CD8-positive, alpha-beta T cell (primary cell): ENCODE measurements at regions of chr5 and their contacts with region 1.

Region 1: DNA sequence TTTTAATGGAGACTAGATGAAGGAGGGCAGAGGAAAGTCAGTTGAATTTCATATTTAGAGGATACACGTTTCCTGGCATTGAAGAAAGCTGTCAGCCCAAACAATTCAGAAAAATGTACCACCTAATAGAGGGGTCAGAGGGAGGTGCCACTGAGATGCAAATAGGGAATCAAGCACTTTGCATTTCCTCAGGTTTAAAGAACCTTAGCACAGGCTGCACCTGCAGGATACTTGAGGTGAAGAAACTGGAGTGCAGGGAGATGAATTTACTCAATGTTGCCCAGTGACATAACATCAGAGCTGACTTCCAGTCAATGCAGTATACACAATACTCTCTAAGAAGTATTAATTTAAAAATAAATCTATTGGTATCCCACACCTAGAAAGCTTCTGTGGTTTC is 67.0 kb upstream of the MAST4 start:
- DNase-seq: no peak
- ATAC-seq: no peak
- H3K4me3 ChIP-seq: no peak overlapping the region
- H3K4me3 Mint-ChIP-seq: no peak overlapping the region
- H3K27ac ChIP-seq: no peak overlapping the region
- H3K27ac Mint-ChIP-seq: no peak overlapping the region
- H3K4me1 ChIP-seq: no peaks in the 10 kb centered on the region
- H3K4me1 Mint-ChIP-seq: no peaks in the 10 kb centered on the region
- H3K27me3 ChIP-seq: no peaks in the 10 kb centered on the region
- H3K27me3 Mint-ChIP-seq: peaks cover 6% of the 10 kb centered on the region
- CTCF ChIP-seq: no peak

Region 2: GRCh38 chr5:65779643-65780042 is 749.5 kb before region 1 on chr5:
- CTCF ChIA-PET with region 1: no interaction called
- POLR2A ChIA-PET with region 1: no interaction called
- intact Hi-C with region 1: loop called in 1 of 2 experiments (anchors 10 kb)
- DNase-seq: peak in 2 of 9 experiments; percentile 12 to 38
- ATAC-seq: peak; percentile 31
- H3K4me3 ChIP-seq: no peak overlapping the region
- H3K4me3 Mint-ChIP-seq: peak overlapping the region; percentile 54
- H3K27ac ChIP-seq: no peak overlapping the region
- H3K27ac Mint-ChIP-seq: peak overlapping the region; percentile 28
- H3K4me1 ChIP-seq: peaks cover 6% of the 10 kb centered on the region
- H3K4me1 Mint-ChIP-seq: peaks cover 16% of the 10 kb centered on the region
- H3K27me3 ChIP-seq: no peaks in the 10 kb centered on the region
- H3K27me3 Mint-ChIP-seq: no peaks in the 10 kb centered on the region
- CTCF ChIP-seq: no peak

Region 3: GRCh38 chr5:66436721-66437120 is 92.5 kb before region 1 on chr5:
- CTCF ChIA-PET with region 1: no interaction called
- POLR2A ChIA-PET with region 1: no interaction called
- intact Hi-C with region 1: no loop called
- DNase-seq: no peak
- ATAC-seq: no peak
- H3K4me3 ChIP-seq: no peak overlapping the region
- H3K4me3 Mint-ChIP-seq: no peak overlapping the region
- H3K27ac ChIP-seq: no peak overlapping the region
- H3K27ac Mint-ChIP-seq: no peak overlapping the region
- H3K4me1 ChIP-seq: no peaks in the 10 kb centered on the region
- H3K4me1 Mint-ChIP-seq: no peaks in the 10 kb centered on the region
- H3K27me3 ChIP-seq: no peaks in the 10 kb centered on the region
- H3K27me3 Mint-ChIP-seq: no peaks in the 10 kb centered on the region
- CTCF ChIP-seq: no peak